Heart left ventricle (tissue), 16 donors: ENCODE measurements at regions of chr6 and their contacts with region 1.

Region 1: DNA sequence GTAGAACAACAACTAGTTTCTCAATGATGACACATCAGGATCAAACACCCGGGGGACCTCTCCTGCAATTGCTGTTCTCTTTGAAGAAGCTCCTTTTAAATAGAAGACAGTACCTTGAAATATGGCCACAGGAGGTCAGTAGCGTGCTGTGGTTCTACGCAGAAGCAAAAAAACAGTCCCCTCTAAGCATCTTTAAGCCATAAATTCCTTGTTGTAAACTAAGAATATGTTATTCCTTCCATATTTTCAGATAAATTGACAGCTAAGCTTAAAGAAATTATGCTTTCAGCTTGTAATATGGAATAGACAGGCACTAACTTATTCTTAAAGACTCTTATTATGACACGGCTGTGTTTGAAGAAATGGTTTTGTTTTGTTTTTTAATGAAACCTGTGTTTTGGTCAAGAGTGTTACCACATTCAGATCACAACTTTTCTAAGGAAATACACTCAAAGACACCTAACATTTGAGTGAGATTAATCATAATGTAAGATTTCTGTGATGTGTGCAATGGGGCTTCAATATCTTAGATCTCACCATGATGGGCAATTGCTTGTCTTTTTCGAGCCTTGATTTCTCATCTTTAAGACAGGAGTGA is 49.7 kb upstream of the IL20RA start:
- DNase-seq: peak in 4 of 5 donors; percentile 39 to 61 (median 42)
- ATAC-seq: peak; percentile 32 to 80 (median 76)
- H3K4me3 ChIP-seq: no peak overlapping the region
- H3K27ac ChIP-seq: no peak overlapping the region
- H3K4me1 ChIP-seq: peaks cover 0 to 10% (median 2%) of the 10 kb centered on the region in 12 donors
- H3K27me3 ChIP-seq: no peaks in the 10 kb centered on the region
- CTCF ChIP-seq: peak; percentile 68 to 92 (median 80)
- POLR2A ChIP-seq: no peak

Region 2: GRCh38 chr6:136920216-136920615 is 174.3 kb before region 1 on chr6:
- intact Hi-C with region 1: no loop called
- DNase-seq: no peak
- ATAC-seq: no peak
- H3K4me3 ChIP-seq: peak overlapping the region in 5 of 12 donors; percentile 47 to 62 (median 57)
- H3K27ac ChIP-seq: no peak overlapping the region
- H3K4me1 ChIP-seq: peaks cover 0 to 36% (median 25%) of the 10 kb centered on the region in 12 donors
- H3K27me3 ChIP-seq: peaks cover 11 to 63% (median 52%) of the 10 kb centered on the region in 9 donors
- CTCF ChIP-seq: no peak
- POLR2A ChIP-seq: no peak

Region 3: GRCh38 chr6:137165375-137166246 is 71.1 kb after region 1 on chr6:
- intact Hi-C with region 1: loop called in 2 of 10 experiments (anchors 5 to 10 kb)
- DNase-seq: no peak
- ATAC-seq: no peak
- H3K4me3 ChIP-seq: no peak overlapping the region
- H3K27ac ChIP-seq: peak overlapping the region in 1 of 12 donors; percentile 37
- H3K4me1 ChIP-seq: peaks cover 0 to 56% (median 0%) of the 10 kb centered on the region in 12 donors
- H3K27me3 ChIP-seq: no peaks in the 10 kb centered on the region
- CTCF ChIP-seq: peak in 4 of 12 donors; percentile 19 to 44 (median 28)
- POLR2A ChIP-seq: no peak

Region 4: DNA sequence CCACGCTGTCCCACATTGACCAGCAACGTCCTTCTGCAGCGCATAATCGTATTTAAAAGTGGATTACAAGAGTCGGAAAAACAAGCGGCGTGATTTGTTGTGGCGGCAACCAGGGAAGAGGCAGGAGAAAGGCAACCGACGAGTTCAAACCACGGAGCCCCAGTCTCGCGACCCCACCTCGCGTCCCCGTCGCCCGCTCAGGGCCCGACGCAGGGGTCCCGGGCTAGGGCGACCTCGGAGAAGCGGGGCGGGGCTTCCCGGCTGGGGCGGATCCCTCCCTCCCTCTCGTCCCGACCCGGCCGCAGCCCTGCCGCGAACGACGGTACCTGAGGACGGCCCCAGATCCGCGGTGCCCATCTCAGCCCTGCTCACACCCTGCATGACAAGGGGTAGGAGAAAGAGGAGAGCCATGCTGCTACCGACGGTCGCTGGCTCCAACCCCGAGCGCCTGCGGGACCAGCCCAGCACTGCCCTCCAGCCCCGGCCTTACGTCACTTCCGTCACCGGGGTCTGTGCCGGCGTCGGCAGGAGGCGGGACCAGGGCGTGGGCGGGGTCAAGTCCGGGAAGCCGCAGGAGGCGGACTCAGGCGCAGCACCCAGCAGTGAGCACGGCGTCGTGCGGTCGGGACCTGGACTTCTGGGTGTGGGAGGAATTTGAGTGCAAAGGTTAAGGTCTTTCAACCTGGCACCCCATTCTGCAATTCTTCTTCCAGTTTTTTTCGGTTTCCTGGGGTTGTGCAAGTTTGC is 124.6 kb after region 1 on chr6 and contains the start of gene IFNGR1:
- intact Hi-C with region 1: loop called in 1 of 10 experiments (anchors 5 kb)
- DNase-seq: peak; percentile 98 to 99 (median 99)
- ATAC-seq: peak; percentile 92 to 97 (median 96)
- H3K4me3 ChIP-seq: peak within 1 kb of the TSS; percentile 73 to 98 (median 84)
- H3K27ac ChIP-seq: peak within 1 kb of the TSS; percentile 96 to 100 (median 99)
- H3K4me1 ChIP-seq: peaks cover 11 to 87% (median 58%) of the 10 kb centered on the region in 12 donors
- H3K27me3 ChIP-seq: no peaks in the 10 kb centered on the region
- CTCF ChIP-seq: no peak
- POLR2A ChIP-seq: peak; percentile 89 to 98
- total RNA-seq, gene IFNGR1: 68.6 to 152 (median 79.2) TPM

Region 5: DNA sequence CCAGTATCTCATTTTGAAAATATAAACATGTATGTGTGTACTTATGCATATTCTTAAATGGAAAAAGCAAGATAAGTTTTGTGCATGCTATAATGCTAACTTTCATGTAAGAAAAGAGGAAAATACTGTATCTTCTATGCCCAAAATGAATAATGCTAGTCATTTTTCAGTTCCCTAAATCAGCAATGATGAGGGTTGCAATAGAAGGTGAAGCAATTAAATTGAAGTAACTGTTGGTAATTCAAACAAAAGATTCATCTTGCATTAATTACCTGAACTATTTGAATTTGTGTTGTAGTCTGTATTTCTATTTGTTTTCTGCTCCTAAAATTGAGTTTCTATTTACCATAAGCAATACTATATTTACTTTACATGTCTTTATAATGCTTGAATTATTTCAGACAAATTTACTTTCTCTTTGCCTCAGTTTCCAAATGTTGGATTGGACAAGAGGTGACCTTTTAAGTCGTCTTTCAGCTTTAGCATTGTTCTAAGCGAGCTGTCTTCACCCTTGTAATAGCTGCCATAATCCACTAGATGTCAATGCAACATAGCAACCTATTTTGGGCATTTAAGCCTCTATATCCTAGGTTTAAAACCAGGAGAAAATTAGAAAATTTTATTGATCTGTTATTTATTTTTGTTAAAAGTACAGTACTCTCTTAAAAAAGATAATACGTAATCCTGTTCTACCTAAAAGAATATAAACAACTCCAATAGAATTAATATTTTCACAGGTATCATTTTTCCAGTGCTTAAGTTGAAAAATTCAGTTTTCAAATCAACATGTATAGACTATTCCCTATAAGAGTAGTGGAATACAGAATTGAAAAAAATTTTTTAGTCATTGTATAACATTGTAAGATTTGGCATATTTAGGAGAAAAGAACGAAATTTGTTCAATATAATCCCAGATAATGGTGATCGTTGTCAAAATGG is 177.0 kb after region 1 on chr6:
- intact Hi-C with region 1: loop called in 5 of 10 experiments (anchors 2 to 10 kb)
- DNase-seq: no peak
- ATAC-seq: peak in 3 of 4 donors; percentile 57 to 85 (median 73)
- H3K4me3 ChIP-seq: no peak overlapping the region
- H3K27ac ChIP-seq: no peak overlapping the region
- H3K4me1 ChIP-seq: peaks cover 0 to 14% (median 0%) of the 10 kb centered on the region in 12 donors
- H3K27me3 ChIP-seq: no peaks in the 10 kb centered on the region
- CTCF ChIP-seq: peak; percentile 78 to 96 (median 92)
- POLR2A ChIP-seq: no peak

Region 6: DNA sequence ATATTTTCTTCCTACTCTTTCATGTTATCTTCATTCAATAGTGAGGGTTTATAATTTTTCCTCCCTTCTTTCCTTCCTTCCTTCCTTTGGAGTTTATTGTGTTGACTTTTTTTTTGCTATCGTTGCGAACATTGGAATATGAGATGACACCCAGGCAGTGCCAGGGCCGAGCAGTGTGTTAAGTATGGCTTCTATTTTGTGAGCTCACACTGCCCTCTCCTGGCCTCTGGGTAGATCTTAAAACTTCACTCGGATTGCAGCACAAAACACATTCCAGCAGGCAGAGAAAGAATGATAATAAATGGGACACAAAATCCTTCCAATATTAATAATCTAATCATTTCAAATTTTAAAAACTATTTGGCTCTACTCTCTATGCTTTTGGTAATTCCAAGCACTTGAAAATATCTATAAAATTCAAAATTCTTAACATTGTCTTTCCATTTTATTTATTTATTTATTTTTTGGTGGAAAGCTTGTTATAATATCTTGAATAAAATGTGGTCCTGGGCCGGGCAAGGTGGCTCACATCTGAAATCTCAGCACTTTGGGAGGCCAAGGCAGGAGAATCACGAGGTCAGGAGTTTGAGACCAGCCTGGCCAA is 547.1 kb after region 1 on chr6:
- intact Hi-C with region 1: loop called in 9 of 10 experiments (anchors 2 to 5 kb)
- DNase-seq: peak in 4 of 5 donors; percentile 60 to 75 (median 66)
- ATAC-seq: peak; percentile 88 to 94 (median 91)
- H3K4me3 ChIP-seq: no peak overlapping the region
- H3K27ac ChIP-seq: no peak overlapping the region
- H3K4me1 ChIP-seq: peaks cover 0 to 9% (median 0%) of the 10 kb centered on the region in 12 donors
- H3K27me3 ChIP-seq: no peaks in the 10 kb centered on the region
- CTCF ChIP-seq: peak; percentile 47 to 79 (median 62)
- POLR2A ChIP-seq: no peak